HepG2 (cell line): ENCODE measurements at regions of chr6 and their contacts with region 1.

Region 1: DNA sequence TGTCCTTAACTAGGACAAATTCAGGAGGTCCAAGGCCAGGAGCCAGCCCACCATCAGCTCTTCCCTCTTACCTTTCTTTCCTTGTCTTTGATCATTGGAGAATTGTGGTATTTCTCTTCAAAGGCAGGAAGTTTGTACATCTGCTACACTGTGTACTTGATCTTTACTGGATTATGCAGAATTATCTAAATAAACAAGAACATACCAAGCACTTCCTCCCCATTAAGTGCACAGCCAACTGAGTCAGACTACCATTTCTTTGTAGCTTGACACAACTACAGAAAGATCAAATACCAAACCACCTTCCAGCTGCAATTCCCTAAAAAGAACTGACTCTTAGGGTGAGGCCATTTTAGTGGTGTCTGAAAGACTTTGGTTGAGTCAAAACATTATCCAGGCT is 195.1 kb downstream of the HDGFL1 start:
- DNase-seq: no peak
- ATAC-seq: no peak
- H3K4me3 ChIP-seq: no peak overlapping the region
- H3K27ac ChIP-seq: no peak overlapping the region
- H3K4me1 ChIP-seq: no peaks in the 10 kb centered on the region
- H3K27me3 ChIP-seq: no peaks in the 10 kb centered on the region
- CTCF ChIP-seq: no peak
- EP300 ChIP-seq: no peak
- POLR2A ChIP-seq: no peak
- RAD21 ChIP-seq: no peak

Region 2: GRCh38 chr6:22880686-22881433 is 116.4 kb after region 1 on chr6:
- CTCF ChIA-PET with region 1: no interaction called
- POLR2A ChIA-PET with region 1: no interaction called
- in situ Hi-C with region 1: no loop called
- intact Hi-C with region 1: loop called (anchors 10 kb)
- DNase-seq: peak; percentile 10
- ATAC-seq: no peak
- H3K4me3 ChIP-seq: no peak overlapping the region
- H3K27ac ChIP-seq: no peak overlapping the region
- H3K4me1 ChIP-seq: no peaks in the 10 kb centered on the region
- H3K27me3 ChIP-seq: no peaks in the 10 kb centered on the region
- CTCF ChIP-seq: no peak
- EP300 ChIP-seq: no peak
- POLR2A ChIP-seq: no peak
- RAD21 ChIP-seq: no peak